SK-N-SH (cell line): ENCODE measurements at regions of chr2 and their contacts with region 1.

Region 1: GRCh38 chr2:26745609-26746327 is 18.3 kb upstream of the SLC35F6 start:
- DNase-seq: peak; percentile 85
- H3K4me3 ChIP-seq: no peak overlapping the region
- H3K27ac ChIP-seq: no peak overlapping the region
- H3K4me1 ChIP-seq: peaks cover 0 to 3% of the 10 kb centered on the region in 2 experiments; a peak in 1 of 4 replicates
- H3K27me3 ChIP-seq: no peaks in the 10 kb centered on the region
- CTCF ChIP-seq: peak; percentile 99
- EP300 ChIP-seq: no peak
- RAD21 ChIP-seq: peak; percentile 100

Region 2: DNA sequence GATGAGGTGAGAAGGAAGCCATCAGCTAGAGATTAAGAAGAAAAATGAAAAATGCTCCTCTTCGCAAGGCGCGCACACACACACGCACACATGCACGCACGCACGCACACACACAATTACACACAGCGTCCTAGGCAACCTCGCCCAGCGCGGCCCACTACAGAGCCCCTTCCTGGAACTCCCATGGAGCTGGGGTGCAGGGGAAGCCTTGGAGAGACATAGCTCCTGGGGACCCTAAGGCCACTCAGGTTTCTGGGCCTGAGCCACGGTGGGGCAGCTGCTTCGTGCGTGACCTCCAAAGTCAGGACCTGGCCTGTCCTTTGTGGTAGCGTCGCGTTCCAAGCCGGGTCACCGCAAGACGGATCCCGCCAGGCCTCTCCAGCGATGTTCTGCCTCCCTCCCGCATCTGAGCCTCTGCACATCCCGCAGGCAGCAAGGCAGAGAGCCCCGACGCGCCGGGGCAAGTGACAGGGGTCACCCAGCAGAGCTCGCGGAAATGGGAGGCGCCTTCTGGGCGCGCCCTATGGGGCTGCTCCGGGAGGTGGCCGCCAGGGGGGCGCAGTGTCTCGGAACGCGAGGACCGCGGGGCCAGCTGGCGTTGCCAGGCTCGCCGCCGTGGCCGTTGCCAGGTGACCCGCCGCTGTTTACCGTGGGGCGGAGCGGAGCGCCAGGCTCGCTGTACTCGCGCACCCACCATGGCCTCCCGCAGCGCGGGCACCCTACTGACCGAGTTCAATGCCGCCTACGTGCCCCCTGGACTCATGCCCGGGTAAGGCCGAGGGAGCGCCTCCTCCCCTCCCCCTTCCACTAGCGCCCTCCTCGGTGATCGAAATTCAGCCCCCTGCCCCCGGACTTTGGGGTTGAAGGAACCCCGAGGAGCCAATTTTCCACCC is 183.6 kb before region 1 on chr2:
- CTCF ChIA-PET with region 1: interaction called, 15 read pairs
- POLR2A ChIA-PET with region 1: no interaction called
- DNase-seq: peak; percentile 99
- H3K4me3 ChIP-seq: peak overlapping the region; percentile 12 to 43; a peak in 3 of 4 replicates
- H3K27ac ChIP-seq: no peak overlapping the region
- H3K4me1 ChIP-seq: peaks cover 0 to 9% of the 10 kb centered on the region in 2 experiments; a peak in 1 of 4 replicates
- H3K27me3 ChIP-seq: peaks cover 85% of the 10 kb centered on the region
- CTCF ChIP-seq: peak; percentile 32; the same call in 1 of the 2 replicates
- EP300 ChIP-seq: no peak
- RAD21 ChIP-seq: peak; percentile 40

Region 3: GRCh38 chr2:26605195-26605998 is 140.4 kb before region 1 on chr2:
- CTCF ChIA-PET with region 1: interaction called, 944 read pairs
- POLR2A ChIA-PET with region 1: no interaction called
- DNase-seq: peak; percentile 78
- H3K4me3 ChIP-seq: no peak overlapping the region; a peak in 1 of 4 replicates
- H3K27ac ChIP-seq: no peak overlapping the region
- H3K4me1 ChIP-seq: no peaks in the 10 kb centered on the region; a peak in 1 of 4 replicates
- H3K27me3 ChIP-seq: peaks cover 21% of the 10 kb centered on the region
- CTCF ChIP-seq: peak; percentile 94
- EP300 ChIP-seq: no peak
- RAD21 ChIP-seq: peak; percentile 99

Region 4: GRCh38 chr2:26675701-26676111 is 70.1 kb before region 1 on chr2:
- CTCF ChIA-PET with region 1: interaction called, 15 read pairs
- POLR2A ChIA-PET with region 1: no interaction called
- DNase-seq: no peak
- H3K4me3 ChIP-seq: no peak overlapping the region
- H3K27ac ChIP-seq: no peak overlapping the region
- H3K4me1 ChIP-seq: peaks cover 0 to 6% of the 10 kb centered on the region in 2 experiments; a peak in 1 of 4 replicates
- H3K27me3 ChIP-seq: peaks cover 63% of the 10 kb centered on the region
- CTCF ChIP-seq: no peak
- EP300 ChIP-seq: no peak
- RAD21 ChIP-seq: no peak; the same call in 1 of the 2 replicates

Region 5: DNA sequence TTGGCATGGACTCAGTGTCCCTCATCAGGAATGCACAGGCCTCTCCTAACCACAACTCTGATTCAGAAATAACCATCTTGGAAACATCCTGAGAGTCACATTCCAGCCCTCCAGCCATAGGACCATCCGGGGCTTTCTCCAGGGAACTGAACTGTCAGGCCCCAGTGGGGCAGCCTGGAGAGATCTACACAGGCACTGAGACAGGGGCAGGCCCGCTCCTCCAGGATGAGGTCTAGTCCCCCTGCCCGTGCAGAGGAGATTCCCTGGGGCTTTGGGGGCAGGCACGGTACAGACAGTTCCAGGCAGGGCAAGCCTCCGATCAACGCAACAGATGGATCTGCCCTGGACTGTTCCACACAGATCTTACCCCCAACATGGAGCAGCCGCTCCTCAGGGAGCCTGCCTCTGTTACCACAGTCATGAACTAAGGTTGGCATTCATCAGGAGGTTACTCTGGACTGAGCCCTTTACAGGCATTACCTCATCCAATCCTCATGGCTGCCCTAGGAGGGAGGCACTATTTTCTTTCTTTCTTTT is 41.3 kb before region 1 on chr2:
- CTCF ChIA-PET with region 1: interaction called, 25 read pairs
- POLR2A ChIA-PET with region 1: no interaction called
- DNase-seq: no peak
- H3K4me3 ChIP-seq: no peak overlapping the region
- H3K27ac ChIP-seq: peak overlapping the region in 1 of 2 experiments; percentile 27; a peak in 1 of 4 replicates
- H3K4me1 ChIP-seq: peaks cover 9 to 44% of the 10 kb centered on the region in 2 experiments; a peak in 2 of 4 replicates
- H3K27me3 ChIP-seq: no peaks in the 10 kb centered on the region
- CTCF ChIP-seq: no peak
- EP300 ChIP-seq: no peak
- RAD21 ChIP-seq: no peak

Region 6: DNA sequence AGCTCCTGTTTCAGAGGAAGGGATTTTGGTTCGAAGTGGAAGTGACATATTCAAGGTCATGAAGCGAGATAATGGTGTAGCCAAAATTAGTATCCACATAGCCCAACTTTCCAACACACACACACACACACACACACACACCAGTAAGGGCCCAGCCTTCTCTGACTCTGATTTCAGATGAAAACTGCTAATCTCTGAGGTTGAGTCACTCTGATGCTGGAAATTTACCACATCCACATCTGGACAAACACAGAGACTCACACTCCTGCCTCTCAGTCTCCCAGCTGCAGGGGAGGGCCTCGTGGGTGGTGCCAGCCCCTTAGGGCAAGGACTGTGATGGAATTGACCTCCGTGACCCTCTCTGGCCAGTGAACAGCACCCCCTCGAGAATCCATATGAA is 10.7 kb before region 1 on chr2:
- CTCF ChIA-PET with region 1: interaction called, 61 read pairs
- POLR2A ChIA-PET with region 1: no interaction called
- DNase-seq: peak; percentile 80
- H3K4me3 ChIP-seq: no peak overlapping the region
- H3K27ac ChIP-seq: no peak overlapping the region
- H3K4me1 ChIP-seq: peaks cover 0 to 18% of the 10 kb centered on the region in 2 experiments; a peak in 1 of 4 replicates
- H3K27me3 ChIP-seq: no peaks in the 10 kb centered on the region
- CTCF ChIP-seq: no peak
- EP300 ChIP-seq: no peak
- RAD21 ChIP-seq: peak; percentile 14; the same call in 1 of the 2 replicates

Region 7: DNA sequence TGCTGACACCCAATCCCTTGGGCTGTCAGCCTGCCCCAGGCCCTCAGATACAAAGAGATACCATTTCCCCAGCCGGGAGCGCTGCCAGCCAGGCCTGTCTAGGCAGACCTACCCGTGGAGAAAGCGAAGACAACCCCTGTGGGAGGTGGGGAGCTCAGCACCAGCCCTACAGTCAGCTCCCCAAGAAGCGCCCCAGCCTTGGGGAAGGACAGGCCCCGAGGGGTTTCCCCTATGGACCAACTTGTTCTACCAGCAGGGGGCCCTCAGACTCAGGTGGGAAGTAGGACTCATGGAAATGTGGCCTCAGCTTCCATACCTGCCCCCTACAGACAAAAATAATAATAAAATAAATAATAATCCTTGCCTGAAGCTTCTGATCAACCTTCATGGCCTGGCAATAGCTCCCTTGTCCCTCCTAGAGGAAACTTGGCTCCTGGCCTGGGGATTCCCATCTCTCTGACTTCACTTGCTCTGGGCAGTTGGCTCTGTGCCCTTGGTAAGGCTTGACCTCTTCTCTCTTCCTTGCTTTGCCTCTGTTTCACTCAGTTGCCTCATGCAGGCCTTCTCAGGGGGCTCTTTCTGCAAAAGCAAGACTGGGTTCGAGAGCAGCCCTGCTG is 25.3 kb after region 1 on chr2:
- CTCF ChIA-PET with region 1: interaction called, 36 read pairs
- POLR2A ChIA-PET with region 1: no interaction called
- DNase-seq: peak; percentile 49
- H3K4me3 ChIP-seq: no peak overlapping the region
- H3K27ac ChIP-seq: peak overlapping the region in 1 of 2 experiments; percentile 19; a peak in 1 of 4 replicates
- H3K4me1 ChIP-seq: peaks cover 20 to 28% of the 10 kb centered on the region in 2 experiments; a peak in 2 of 4 replicates
- H3K27me3 ChIP-seq: no peaks in the 10 kb centered on the region
- CTCF ChIP-seq: peak; percentile 57
- EP300 ChIP-seq: no peak
- RAD21 ChIP-seq: no peak

Region 8: GRCh38 chr2:26911911-26912861 is 166.4 kb after region 1 on chr2:
- CTCF ChIA-PET with region 1: no interaction called
- POLR2A ChIA-PET with region 1: no interaction called
- DNase-seq: peak; percentile 83
- H3K4me3 ChIP-seq: peak overlapping the region in 1 of 2 experiments; percentile 19; a peak in 1 of 4 replicates
- H3K27ac ChIP-seq: peak overlapping the region in 1 of 2 experiments; percentile 98; a peak in 2 of 4 replicates
- H3K4me1 ChIP-seq: peaks cover 3 to 45% of the 10 kb centered on the region in 2 experiments; a peak in 3 of 4 replicates
- H3K27me3 ChIP-seq: peaks cover 32% of the 10 kb centered on the region; the same call in 1 of the 2 replicates
- CTCF ChIP-seq: no peak
- EP300 ChIP-seq: peak in 1 of 2 experiments; percentile 86; a peak in 2 of 4 replicates
- RAD21 ChIP-seq: peak; percentile 13; the same call in 1 of the 2 replicates

Region 9: GRCh38 chr2:26922405-26923188 is 176.8 kb after region 1 on chr2:
- CTCF ChIA-PET with region 1: no interaction called
- POLR2A ChIA-PET with region 1: no interaction called
- DNase-seq: peak; percentile 89
- H3K4me3 ChIP-seq: no peak overlapping the region
- H3K27ac ChIP-seq: peak overlapping the region in 1 of 2 experiments; percentile 22; a peak in 1 of 4 replicates
- H3K4me1 ChIP-seq: peaks cover 0 to 16% of the 10 kb centered on the region in 2 experiments; a peak in 2 of 4 replicates
- H3K27me3 ChIP-seq: peaks cover 9% of the 10 kb centered on the region; the same call in 1 of the 2 replicates
- CTCF ChIP-seq: peak; percentile 57
- EP300 ChIP-seq: no peak
- RAD21 ChIP-seq: peak; percentile 88

Region 10: GRCh38 chr2:26954135-26954534 is 208.4 kb after region 1 on chr2:
- CTCF ChIA-PET with region 1: no interaction called
- POLR2A ChIA-PET with region 1: no interaction called
- DNase-seq: no peak
- H3K4me3 ChIP-seq: no peak overlapping the region
- H3K27ac ChIP-seq: no peak overlapping the region
- H3K4me1 ChIP-seq: peaks cover 0 to 2% of the 10 kb centered on the region in 2 experiments; a peak in 1 of 4 replicates
- H3K27me3 ChIP-seq: peaks cover 61% of the 10 kb centered on the region
- CTCF ChIP-seq: no peak
- EP300 ChIP-seq: no peak
- RAD21 ChIP-seq: no peak